ENCODE measurements at regions of chr5 and their contacts with region 1.

Region 1: DNA sequence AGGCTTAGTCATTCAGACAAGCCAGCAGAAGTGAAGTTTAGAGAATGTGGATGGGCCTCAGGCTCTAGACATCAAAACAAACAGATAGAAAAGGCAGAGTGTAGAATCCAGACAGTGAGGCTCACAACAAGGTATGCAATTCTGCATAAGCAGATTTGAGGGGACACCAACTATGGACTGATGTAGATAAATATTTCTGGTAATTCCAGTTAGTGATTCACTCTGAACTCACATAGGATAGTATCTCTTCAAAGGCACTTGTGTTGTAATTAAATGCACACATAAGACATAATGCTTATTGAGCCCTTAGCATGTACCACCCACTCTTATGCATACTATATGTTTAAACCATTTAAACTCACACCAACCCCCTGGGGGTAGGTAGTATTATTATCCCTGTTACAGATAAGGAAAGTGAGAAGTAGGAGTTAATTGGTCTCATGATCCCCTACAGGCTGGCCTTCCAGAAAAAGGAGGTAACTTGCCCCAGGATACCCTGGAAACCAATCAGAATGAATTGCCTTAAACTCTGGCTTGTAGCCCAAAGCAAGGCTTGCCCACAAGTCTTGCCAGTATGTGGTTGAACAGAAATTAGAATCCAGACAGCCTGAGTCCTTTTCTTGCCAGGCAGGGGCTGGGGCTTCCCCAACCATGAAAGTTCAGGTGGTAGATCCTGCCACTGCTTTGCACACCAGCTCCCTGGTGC is 39.5 kb upstream of the HSPB3 start:
- DNase-seq: no peak
- ATAC-seq: no peak
- H3K4me3 ChIP-seq: no peak overlapping the region
- H3K27ac ChIP-seq: no peak overlapping the region
- H3K4me1 ChIP-seq: no peaks in the 10 kb centered on the region
- H3K27me3 ChIP-seq: no peaks in the 10 kb centered on the region

Region 2: GRCh38 chr5:54310433-54311175 is 105.4 kb before region 1 on chr5 and contains the start of gene ARL15:
- intact Hi-C with region 1: loop called in 1 of 2 experiments (anchors 10 kb)
- DNase-seq: peak; percentile 99
- ATAC-seq: peak; percentile 98
- H3K4me3 ChIP-seq: peak within 1 kb of the TSS; percentile 69 to 97
- H3K27ac ChIP-seq: peak within 1 kb of the TSS in 1 of 2 donors; percentile 62
- H3K4me1 ChIP-seq: no peaks in the 10 kb centered on the region
- H3K27me3 ChIP-seq: no peaks in the 10 kb centered on the region
- total RNA-seq, gene ARL15: 27.9 to 44.7 TPM

Measured in aorta (tissue), 5 donors.